ENCODE measurements at regions of chr2 and their contacts with region 1.

Region 1: GRCh38 chr2:16727256-16727655 is 61.6 kb upstream of the CYRIA start:
- DNase-seq: no peak
- H3K4me3 Mint-ChIP-seq: no peak overlapping the region
- H3K27ac Mint-ChIP-seq: no peak overlapping the region
- H3K4me1 Mint-ChIP-seq: peaks cover 25% of the 10 kb centered on the region
- H3K27me3 Mint-ChIP-seq: peaks cover 2% of the 10 kb centered on the region

Region 2: GRCh38 chr2:16623031-16623430 is 104.2 kb before region 1 on chr2:
- intact Hi-C with region 1: loop called (anchors 2 kb)
- DNase-seq: no peak
- H3K4me3 Mint-ChIP-seq: no peak overlapping the region
- H3K27ac Mint-ChIP-seq: no peak overlapping the region
- H3K4me1 Mint-ChIP-seq: peaks cover 41% of the 10 kb centered on the region
- H3K27me3 Mint-ChIP-seq: peaks cover 11% of the 10 kb centered on the region

Region 3: GRCh38 chr2:16649353-16650286 is 77.6 kb before region 1 on chr2:
- intact Hi-C with region 1: loop called (anchors 5 kb)
- DNase-seq: no peak
- H3K4me3 Mint-ChIP-seq: no peak overlapping the region
- H3K27ac Mint-ChIP-seq: no peak overlapping the region
- H3K4me1 Mint-ChIP-seq: peaks cover 12% of the 10 kb centered on the region
- H3K27me3 Mint-ChIP-seq: no peaks in the 10 kb centered on the region

Region 4: GRCh38 chr2:16665748-16666448 is 61.4 kb before region 1 on chr2 and contains the start of gene CYRIA:
- intact Hi-C with region 1: loop called (anchors 1 kb)
- DNase-seq: peak; percentile 46
- H3K4me3 Mint-ChIP-seq: peak within 1 kb of the TSS; percentile 87
- H3K27ac Mint-ChIP-seq: peak within 1 kb of the TSS; percentile 86
- H3K4me1 Mint-ChIP-seq: peaks cover 24% of the 10 kb centered on the region
- H3K27me3 Mint-ChIP-seq: peaks cover 43% of the 10 kb centered on the region
- total RNA-seq, gene CYRIA: 1.8 TPM in 2 replicates

Region 5: GRCh38 chr2:16745466-16745865 is 18.2 kb after region 1 on chr2:
- intact Hi-C with region 1: loop called (anchors 1 kb)
- DNase-seq: no peak
- H3K4me3 Mint-ChIP-seq: no peak overlapping the region
- H3K27ac Mint-ChIP-seq: no peak overlapping the region
- H3K4me1 Mint-ChIP-seq: peaks cover 31% of the 10 kb centered on the region
- H3K27me3 Mint-ChIP-seq: peaks cover 1% of the 10 kb centered on the region